ENCODE measurements at regions of chr11 and their contacts with region 1.

Region 1: DNA sequence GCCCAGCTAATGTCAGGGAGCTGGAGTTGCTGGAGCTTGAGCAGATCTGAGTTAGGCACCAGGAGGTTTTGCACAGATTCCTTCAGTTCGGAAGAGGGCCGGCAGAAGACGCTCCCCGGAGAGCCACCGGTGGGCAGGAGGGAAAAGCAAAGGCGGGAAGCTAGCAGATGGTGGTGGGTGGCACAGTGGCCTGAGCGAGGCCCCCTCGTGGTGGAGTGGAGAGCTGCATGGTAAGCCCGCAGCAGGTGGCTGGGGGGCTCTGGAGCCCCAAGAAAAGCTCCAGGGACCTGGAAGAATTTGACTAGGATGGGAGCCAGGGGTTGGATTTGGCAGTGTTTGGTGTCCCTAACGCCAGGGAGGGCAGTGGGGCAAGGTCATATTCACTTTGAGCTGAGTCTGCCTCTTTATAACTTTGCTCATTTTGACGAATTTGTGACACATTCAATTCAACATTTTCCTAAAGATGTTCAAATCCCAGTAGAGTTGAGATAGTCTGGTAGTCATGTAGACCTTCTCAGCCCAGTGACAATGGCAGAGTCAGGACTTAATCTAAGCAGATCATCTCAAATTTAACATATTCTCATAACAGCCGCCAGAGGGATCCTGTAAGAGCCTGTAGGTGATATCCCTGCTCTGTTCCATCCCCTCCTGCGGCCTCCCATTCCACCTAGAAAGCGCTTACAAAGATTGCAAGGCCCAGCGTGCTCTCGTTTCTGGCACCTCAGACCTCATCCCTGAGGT is 58.0 kb downstream of the TRIM29 start:
- DNase-seq: no peak
- H3K4me3 ChIP-seq: no peak overlapping the region
- H3K27me3 ChIP-seq: no peaks in the 10 kb centered on the region; the same call in 1 of the 2 replicates
- CTCF ChIP-seq: peak; percentile 62

Region 2: DNA sequence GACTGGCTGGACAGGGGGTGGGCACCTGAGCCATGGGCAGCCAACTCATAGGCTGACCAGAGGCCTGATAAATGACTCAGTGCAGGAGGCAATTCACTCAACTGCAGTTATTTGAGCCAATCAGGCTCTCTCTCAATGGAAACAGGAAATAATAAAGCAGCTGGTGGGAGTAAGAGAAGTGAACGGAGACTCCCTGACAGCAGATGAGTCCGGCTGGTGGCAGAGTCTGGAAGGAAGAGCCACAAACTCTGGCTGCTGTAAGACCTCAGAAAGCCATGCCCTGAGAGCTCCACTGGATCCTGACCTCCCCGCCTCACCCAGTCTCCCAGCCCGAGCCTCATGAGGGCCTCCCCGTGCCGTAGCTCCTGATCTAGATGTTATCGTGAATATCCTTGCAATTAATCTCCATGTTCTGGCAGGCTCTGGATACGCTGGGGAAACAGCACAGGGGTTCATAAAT is 11.8 kb before region 1 on chr11:
- CTCF ChIA-PET with region 1: interaction called, 10 read pairs
- POLR2A ChIA-PET with region 1: no interaction called
- DNase-seq: peak; percentile 15
- H3K4me3 ChIP-seq: no peak overlapping the region
- H3K27me3 ChIP-seq: peaks cover 11% of the 10 kb centered on the region
- CTCF ChIP-seq: no peak

Measured in BJ (cell line).